Prostate gland (tissue), 2 donors: ENCODE measurements at regions of chr4 and their contacts with region 1.

Region 1: GRCh38 chr4:88591787-88592599 is at the start of gene HERC3:
- DNase-seq: peak; percentile 91
- H3K4me3 ChIP-seq: peak within 1 kb of the TSS; percentile 87 to 99
- H3K27ac ChIP-seq: peak within 1 kb of the TSS; percentile 95 to 96
- H3K4me1 ChIP-seq: peaks cover 5% of the 10 kb centered on the region
- H3K27me3 ChIP-seq: no peaks in the 10 kb centered on the region
- CTCF ChIP-seq: peak in 2 of 4 experiments; percentile 26 to 52
- POLR2A ChIP-seq: peak; percentile 78
- total RNA-seq, gene HERC3: 36.5 to 42.2 TPM

Region 2: GRCh38 chr4:88291003-88291402 is 301.0 kb before region 1 on chr4:
- intact Hi-C with region 1: loop called (anchors 10 kb)
- DNase-seq: peak; percentile 64
- H3K4me3 ChIP-seq: no peak overlapping the region
- H3K27ac ChIP-seq: peak overlapping the region; percentile 6 to 37
- H3K4me1 ChIP-seq: no peaks in the 10 kb centered on the region
- H3K27me3 ChIP-seq: no peaks in the 10 kb centered on the region
- CTCF ChIP-seq: no peak
- POLR2A ChIP-seq: no peak